ENCODE measurements at regions of chr2 and their contacts with region 1.

Region 1: GRCh38 chr2:37168217-37168981 is 11.6 kb upstream of the EIF2AK2 start:
- DNase-seq: no peak
- H3K4me3 ChIP-seq: no peak overlapping the region
- H3K27ac ChIP-seq: no peak overlapping the region
- H3K27me3 ChIP-seq: no peaks in the 10 kb centered on the region
- CTCF ChIP-seq: peak; percentile 77

Region 2: DNA sequence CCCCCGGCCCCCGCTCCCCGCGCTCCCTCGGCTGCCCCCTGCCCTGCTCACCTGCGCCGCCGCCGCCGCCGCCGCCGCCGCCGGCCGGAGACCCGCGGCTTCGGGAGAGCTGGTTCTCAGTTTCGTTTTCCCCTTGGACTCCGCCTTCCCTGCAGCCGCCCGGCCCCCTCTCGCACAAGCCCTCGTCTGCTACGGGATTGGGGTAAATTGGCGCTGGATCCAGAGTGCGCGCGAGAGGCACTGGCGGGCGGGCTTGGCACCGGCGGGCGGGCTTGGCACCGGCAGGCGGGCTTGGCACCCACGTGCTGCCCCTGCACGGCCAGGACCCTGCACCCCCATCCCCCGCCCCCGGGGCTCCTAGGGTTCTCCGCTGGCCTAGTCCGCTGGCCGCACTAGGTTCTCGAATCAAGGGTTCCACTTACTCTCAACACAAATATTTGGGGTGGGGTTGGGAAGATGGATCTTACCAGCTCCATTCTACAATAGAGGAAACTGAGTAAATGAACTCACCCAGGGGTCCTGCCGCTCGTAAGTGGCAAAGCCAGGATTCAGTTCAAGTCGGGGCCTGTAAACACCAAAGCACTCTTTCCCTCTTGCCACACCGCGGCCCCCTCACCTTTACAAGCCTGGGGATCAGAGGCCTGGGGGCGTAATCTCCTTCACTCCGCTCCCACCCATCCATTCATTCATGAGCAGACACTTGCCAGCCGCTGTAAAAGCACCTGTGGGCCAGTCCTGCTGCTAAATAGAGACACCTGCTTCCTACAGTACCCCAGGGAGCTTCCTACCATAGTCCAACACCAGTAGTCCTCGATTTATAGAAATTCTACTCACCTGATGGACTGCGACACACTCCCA is 11.3 kb before region 1 on chr2 and contains the start of gene EIF2AK2:
- CTCF ChIA-PET with region 1: interaction called, 10 read pairs
- POLR2A ChIA-PET with region 1: interaction called, 3 read pairs
- DNase-seq: peak; percentile 43
- H3K4me3 ChIP-seq: peak within 1 kb of the TSS; percentile 87
- H3K27ac ChIP-seq: peak within 1 kb of the TSS; percentile 88
- H3K27me3 ChIP-seq: no peaks in the 10 kb centered on the region
- CTCF ChIP-seq: no peak
- polyA plus RNA-seq, gene EIF2AK2: 24.2 and 36.5 TPM in 2 replicates

Region 3: DNA sequence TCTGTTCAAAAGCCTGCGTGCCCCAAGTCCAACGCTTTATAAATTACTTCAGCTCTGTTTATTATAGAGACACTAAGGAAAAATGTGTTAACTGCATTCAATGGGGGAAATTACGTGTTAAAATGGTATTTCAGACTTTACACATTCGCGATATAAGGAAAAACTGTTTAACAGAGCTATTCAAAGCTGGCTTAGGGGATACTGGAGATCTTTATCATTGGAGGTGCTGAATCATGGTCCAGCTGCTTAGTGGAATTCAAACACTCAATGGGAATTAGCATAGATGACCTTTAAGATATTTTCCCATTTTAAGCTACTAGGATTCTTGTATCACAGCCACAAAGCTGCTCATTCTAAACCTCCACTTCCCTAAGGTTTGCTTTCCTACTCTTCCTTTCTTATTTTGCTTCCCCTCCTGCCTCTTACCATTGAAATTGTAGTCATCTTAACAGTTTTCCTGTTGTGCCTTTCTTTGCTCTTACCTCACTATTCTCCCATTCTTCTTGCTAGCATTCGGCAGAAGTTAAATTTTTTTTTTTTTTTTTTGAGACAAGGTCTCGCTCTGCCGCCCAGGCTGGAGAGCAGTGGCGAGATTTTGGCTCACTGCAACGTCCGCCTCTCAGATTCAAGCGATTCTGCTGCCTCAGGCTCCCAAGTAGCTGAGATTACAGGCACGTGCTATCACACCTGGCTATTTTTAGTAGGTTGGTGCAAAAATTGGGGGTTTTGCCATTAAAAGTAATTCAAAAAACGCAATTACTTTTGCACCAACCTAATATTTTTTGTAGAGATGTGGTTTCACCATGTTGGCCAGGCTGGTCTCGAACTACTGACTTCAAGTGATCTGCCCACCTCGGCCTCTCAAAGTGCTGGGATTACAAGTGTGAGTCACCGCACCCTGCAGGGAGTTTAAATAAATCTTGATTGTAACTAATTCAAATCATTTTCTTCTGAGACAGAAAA is 13.6 kb after region 1 on chr2:
- CTCF ChIA-PET with region 1: interaction called, 16 read pairs
- POLR2A ChIA-PET with region 1: no interaction called
- DNase-seq: no peak
- H3K4me3 ChIP-seq: no peak overlapping the region
- H3K27ac ChIP-seq: no peak overlapping the region
- H3K27me3 ChIP-seq: no peaks in the 10 kb centered on the region
- CTCF ChIP-seq: no peak

Region 4: DNA sequence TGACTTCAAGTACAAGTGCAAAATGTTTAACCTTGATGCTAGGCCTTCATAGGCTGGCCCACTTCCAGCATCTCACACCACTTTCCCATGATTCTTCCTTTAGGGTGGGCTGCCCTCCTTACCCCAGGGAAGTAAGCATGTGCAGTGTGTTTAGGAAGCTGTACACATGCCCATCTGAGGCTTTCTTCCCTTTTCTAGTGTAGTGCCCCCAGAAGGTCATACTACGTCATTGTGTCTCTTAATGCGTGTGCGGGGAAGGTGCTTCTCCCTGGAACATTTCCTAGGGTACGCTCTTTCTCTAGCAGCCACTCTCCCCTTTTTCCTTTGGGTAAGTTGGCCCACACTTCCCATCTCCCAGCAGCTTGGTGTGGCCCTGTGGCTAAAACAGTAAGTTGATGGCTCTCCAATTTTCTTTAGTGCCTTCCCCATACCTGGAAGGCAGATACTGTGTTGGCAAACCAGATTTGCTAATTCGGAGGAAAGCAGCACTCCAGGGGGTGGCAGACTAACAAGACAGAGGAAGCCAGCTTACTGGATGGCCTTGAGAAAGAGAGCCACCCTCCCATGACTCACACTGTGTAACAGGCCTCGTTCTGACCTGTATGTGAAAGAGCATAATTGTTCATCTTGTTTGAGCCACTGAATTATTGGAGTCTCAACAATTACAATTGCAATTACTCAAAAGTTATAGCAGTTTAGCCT is 21.2 kb after region 1 on chr2:
- CTCF ChIA-PET with region 1: interaction called, 16 read pairs
- POLR2A ChIA-PET with region 1: no interaction called
- DNase-seq: no peak
- H3K4me3 ChIP-seq: no peak overlapping the region
- H3K27ac ChIP-seq: no peak overlapping the region
- H3K27me3 ChIP-seq: no peaks in the 10 kb centered on the region
- CTCF ChIP-seq: no peak